ENCODE measurements at regions of chr21 and their contacts with region 1.

Region 1: DNA sequence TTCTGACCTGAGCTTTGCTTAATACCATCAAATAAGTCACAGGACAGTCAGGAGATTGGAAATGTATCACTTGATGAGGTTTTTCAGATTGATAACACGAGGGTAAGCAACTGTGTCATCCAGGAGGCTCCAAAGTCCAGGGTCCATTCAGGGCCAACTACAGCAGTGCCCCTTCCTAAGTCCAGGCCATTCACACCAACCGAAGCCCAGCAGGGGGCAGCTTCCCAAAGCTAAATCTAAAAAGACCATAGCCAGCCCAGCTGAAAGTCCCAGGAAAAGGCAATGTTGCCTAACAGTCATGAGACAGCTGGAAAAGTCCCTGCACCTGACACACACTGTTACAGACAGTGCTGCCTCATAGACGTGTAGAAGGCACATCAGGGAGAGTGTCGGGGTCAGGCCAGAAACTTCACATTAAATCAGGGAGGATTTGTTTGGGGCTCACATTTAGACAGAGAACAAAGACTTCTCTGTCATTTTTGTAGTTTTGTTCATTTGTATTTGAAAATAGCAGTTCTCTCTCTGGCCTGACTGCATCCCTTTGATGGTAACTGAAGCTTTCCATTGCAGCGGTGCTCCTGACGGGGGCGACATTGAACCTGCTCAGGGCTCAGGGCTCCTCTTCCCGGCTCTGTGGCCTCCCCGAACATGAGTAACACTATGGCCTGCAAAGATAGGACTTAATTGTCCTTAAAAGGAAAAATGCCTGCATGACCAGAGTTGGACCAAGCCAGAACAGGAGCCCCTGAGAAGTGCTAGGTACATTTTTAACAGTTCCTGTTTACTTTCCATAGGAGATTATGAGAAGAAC is 200.4 kb downstream of the NRIP1 start:
- DNase-seq: peak; percentile 78
- H3K4me3 Mint-ChIP-seq: no peak overlapping the region
- H3K27ac Mint-ChIP-seq: peak overlapping the region; percentile 65
- H3K4me1 Mint-ChIP-seq: peaks cover 44% of the 10 kb centered on the region
- H3K27me3 Mint-ChIP-seq: no peaks in the 10 kb centered on the region
- CTCF ChIP-seq: peak; percentile 53

Region 2: GRCh38 chr21:14259747-14260146 is 604.7 kb before region 1 on chr21:
- CTCF ChIA-PET with region 1: no interaction called
- intact Hi-C with region 1: loop called (anchors 2 kb)
- DNase-seq: no peak
- H3K4me3 Mint-ChIP-seq: no peak overlapping the region
- H3K27ac Mint-ChIP-seq: no peak overlapping the region
- H3K4me1 Mint-ChIP-seq: no peaks in the 10 kb centered on the region
- H3K27me3 Mint-ChIP-seq: no peaks in the 10 kb centered on the region
- CTCF ChIP-seq: peak; percentile 47

Region 3: DNA sequence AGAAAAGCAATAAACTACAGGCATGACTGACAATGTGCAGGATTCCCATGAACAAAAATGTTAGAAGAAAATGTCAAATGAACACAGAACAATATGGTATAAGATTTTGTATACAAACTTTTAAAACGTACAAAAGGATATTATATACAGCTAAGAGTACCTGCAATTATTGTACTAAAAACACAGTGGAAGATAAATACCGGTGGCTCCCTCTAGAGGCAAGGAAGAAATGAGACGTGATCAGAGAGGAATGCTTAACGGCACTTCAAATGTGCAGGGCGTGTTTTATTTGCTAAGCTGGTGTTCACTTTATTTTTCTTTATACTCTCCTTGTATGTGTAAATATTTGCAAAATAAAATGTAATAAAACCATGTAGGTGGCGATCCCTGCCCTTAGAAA is 126.5 kb before region 1 on chr21:
- CTCF ChIA-PET with region 1: no interaction called
- intact Hi-C with region 1: loop called (anchors 5 kb)
- DNase-seq: peak; percentile 48
- H3K4me3 Mint-ChIP-seq: no peak overlapping the region
- H3K27ac Mint-ChIP-seq: no peak overlapping the region
- H3K4me1 Mint-ChIP-seq: peaks cover 17% of the 10 kb centered on the region
- H3K27me3 Mint-ChIP-seq: no peaks in the 10 kb centered on the region
- CTCF ChIP-seq: peak; percentile 27

Region 4: GRCh38 chr21:15170614-15171013 is 306.2 kb after region 1 on chr21:
- CTCF ChIA-PET with region 1: interaction called, 15 read pairs
- intact Hi-C with region 1: no loop called
- DNase-seq: no peak
- H3K4me3 Mint-ChIP-seq: no peak overlapping the region
- H3K27ac Mint-ChIP-seq: no peak overlapping the region
- H3K4me1 Mint-ChIP-seq: no peaks in the 10 kb centered on the region
- H3K27me3 Mint-ChIP-seq: no peaks in the 10 kb centered on the region
- CTCF ChIP-seq: no peak

Region 5: GRCh38 chr21:15552914-15553494 is 688.6 kb after region 1 on chr21:
- CTCF ChIA-PET with region 1: interaction called, 10 read pairs
- intact Hi-C with region 1: loop called (anchors 10 kb)
- DNase-seq: no peak
- H3K4me3 Mint-ChIP-seq: no peak overlapping the region
- H3K27ac Mint-ChIP-seq: no peak overlapping the region
- H3K4me1 Mint-ChIP-seq: no peaks in the 10 kb centered on the region
- H3K27me3 Mint-ChIP-seq: no peaks in the 10 kb centered on the region
- CTCF ChIP-seq: no peak